ENCODE measurements at regions of chr3 and their contacts with region 1.

Region 1: DNA sequence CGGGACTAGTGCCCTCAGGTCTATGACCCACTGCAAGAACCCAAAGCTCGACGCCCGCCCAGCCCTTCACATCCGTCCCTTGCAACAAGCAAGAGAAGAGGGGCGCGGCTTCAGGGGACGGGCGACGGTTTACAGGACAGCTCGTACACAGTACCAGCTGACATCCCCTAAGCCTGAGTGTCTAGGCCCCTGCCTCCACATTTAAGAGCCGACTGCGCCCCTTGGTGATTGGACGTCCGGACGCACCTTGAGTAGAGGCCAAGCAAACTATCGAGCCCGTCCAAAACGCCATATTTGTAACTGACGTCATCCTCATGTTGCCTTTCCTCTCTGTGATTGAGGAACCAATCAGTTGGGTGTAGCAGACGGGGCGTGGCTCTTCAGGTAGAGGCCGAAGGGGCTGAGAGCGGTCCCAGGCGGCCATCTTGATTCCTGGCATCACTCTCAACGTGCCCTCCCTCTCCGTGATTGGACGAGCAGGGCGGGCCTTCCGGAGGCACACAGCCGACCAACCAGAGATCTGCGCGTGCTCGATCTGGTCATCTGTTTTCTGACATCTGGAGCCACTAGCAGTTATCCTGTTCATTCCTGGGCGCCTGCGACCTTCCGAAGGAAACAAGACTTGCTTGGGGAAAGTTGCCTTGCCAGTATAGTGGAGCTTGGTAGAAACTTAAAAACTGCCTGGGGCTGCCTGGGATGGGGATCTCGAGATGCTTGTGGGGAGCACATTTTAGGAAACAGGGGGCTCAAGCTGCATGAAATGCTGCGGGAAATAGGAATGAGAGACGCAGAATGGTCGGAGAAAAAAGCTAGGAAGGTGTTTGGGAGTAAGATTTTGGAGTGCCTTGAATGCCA is 4.0 kb upstream of the RPL14 start:
- DNase-seq: peak; percentile 94
- H3K4me3 ChIP-seq: peak overlapping the region; percentile 70 to 83
- H3K27ac ChIP-seq: peak overlapping the region; percentile 68 to 94
- H3K4me1 ChIP-seq: peaks cover 0 to 10% of the 10 kb centered on the region in 2 experiments; a peak in 2 of 4 replicates
- H3K27me3 ChIP-seq: no peaks in the 10 kb centered on the region
- CTCF ChIP-seq: no peak
- EP300 ChIP-seq: no peak
- RAD21 ChIP-seq: peak; percentile 56

Region 2: GRCh38 chr3:40229386-40229785 is 223.7 kb before region 1 on chr3:
- CTCF ChIA-PET with region 1: no interaction called
- POLR2A ChIA-PET with region 1: no interaction called
- DNase-seq: no peak
- H3K4me3 ChIP-seq: no peak overlapping the region
- H3K27ac ChIP-seq: no peak overlapping the region
- H3K4me1 ChIP-seq: peaks cover 0 to 8% of the 10 kb centered on the region in 2 experiments; a peak in 1 of 4 replicates
- H3K27me3 ChIP-seq: no peaks in the 10 kb centered on the region
- CTCF ChIP-seq: no peak
- EP300 ChIP-seq: no peak
- RAD21 ChIP-seq: no peak

Region 3: DNA sequence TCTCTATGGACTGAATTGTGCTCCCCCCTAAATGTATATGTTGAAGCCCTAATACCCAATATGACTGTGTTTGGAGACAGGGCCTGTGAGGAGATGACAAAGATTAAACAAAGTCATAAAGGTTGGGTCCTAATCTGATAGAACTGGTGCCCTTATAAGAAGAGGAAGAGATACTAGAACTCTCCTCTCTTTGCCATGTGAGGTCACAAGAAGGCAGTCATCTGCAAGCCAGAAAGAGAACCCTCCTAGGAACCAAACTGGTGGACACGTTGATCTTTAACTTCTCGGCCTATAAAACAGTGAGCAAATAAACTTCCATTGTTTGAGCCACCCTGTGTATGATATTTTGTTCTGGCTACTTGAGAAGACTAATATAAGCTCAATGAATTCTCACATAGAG is 97.7 kb before region 1 on chr3:
- CTCF ChIA-PET with region 1: no interaction called
- POLR2A ChIA-PET with region 1: no interaction called
- DNase-seq: no peak
- H3K4me3 ChIP-seq: no peak overlapping the region
- H3K27ac ChIP-seq: no peak overlapping the region
- H3K4me1 ChIP-seq: no peaks in the 10 kb centered on the region
- H3K27me3 ChIP-seq: no peaks in the 10 kb centered on the region
- CTCF ChIP-seq: no peak
- EP300 ChIP-seq: no peak
- RAD21 ChIP-seq: no peak

Region 4: DNA sequence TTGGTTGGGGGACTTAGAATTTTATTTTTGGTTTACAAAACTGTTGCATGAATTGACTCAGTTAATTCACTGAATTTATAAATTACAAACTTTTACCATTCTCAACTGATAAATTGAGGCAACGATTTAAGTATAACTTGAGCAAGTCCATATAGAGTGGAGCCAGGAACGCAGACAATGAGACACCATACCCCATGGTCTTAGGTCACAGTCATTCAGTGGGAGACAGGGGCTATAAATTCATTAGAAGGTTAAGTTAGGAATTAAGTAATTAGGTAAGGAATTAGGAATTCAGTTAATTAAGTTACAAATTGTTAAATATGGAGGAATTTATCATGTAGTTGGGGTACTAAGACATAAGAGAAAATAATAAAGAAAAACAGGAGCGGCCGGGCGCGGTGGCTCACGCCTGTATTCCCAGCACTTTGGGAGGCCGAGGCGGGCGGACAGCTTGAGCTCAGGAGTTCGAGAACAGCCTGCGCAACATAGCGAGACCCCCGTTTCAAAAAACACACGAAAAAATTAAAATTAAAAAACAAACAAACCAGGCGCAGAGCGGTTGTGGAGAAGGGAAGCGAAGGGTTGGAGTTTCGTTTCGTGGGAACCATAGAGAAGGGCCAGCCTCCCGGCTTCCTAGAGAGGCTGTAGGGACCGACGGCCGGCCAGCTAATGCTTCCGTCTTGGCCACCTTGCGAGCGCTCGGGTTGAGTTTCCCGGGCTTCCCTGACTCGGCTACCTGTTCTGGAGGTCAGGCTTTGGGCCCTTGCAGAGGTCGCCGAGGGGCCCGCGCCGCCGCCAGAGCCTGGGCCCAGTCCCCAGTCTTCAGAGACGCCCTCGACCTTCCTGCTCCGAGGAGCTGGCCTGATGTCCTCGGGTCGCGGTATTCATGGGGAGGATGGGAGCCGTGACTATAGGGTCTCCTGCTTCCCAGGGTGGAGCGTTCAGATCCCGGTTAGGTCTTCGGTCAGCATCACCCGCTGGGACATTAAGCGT is 23.7 kb after region 1 on chr3 and contains the start of gene ZNF619:
- CTCF ChIA-PET with region 1: no interaction called
- POLR2A ChIA-PET with region 1: interaction called, 15 read pairs
- DNase-seq: peak; percentile 86
- H3K4me3 ChIP-seq: peak within 1 kb of the TSS; percentile 81 to 95
- H3K27ac ChIP-seq: peak within 1 kb of the TSS; percentile 32 to 61; a peak in 2 of 4 replicates
- H3K4me1 ChIP-seq: peaks cover 4 to 6% of the 10 kb centered on the region in 2 experiments; a peak in 2 of 4 replicates
- H3K27me3 ChIP-seq: no peaks in the 10 kb centered on the region
- CTCF ChIP-seq: no peak
- EP300 ChIP-seq: no peak
- RAD21 ChIP-seq: no peak
- polyA plus RNA-seq, gene ZNF619: 1.6 and 2.4 TPM in 2 replicates

Region 5: GRCh38 chr3:40803311-40803710 is 350.2 kb after region 1 on chr3:
- CTCF ChIA-PET with region 1: no interaction called
- POLR2A ChIA-PET with region 1: no interaction called
- DNase-seq: no peak
- H3K4me3 ChIP-seq: no peak overlapping the region
- H3K27ac ChIP-seq: no peak overlapping the region
- H3K4me1 ChIP-seq: no peaks in the 10 kb centered on the region
- H3K27me3 ChIP-seq: no peaks in the 10 kb centered on the region
- CTCF ChIP-seq: no peak
- EP300 ChIP-seq: no peak
- RAD21 ChIP-seq: no peak